HepG2 (cell line): ENCODE measurements at regions of chr9 and their contacts with region 1.

Region 1: DNA sequence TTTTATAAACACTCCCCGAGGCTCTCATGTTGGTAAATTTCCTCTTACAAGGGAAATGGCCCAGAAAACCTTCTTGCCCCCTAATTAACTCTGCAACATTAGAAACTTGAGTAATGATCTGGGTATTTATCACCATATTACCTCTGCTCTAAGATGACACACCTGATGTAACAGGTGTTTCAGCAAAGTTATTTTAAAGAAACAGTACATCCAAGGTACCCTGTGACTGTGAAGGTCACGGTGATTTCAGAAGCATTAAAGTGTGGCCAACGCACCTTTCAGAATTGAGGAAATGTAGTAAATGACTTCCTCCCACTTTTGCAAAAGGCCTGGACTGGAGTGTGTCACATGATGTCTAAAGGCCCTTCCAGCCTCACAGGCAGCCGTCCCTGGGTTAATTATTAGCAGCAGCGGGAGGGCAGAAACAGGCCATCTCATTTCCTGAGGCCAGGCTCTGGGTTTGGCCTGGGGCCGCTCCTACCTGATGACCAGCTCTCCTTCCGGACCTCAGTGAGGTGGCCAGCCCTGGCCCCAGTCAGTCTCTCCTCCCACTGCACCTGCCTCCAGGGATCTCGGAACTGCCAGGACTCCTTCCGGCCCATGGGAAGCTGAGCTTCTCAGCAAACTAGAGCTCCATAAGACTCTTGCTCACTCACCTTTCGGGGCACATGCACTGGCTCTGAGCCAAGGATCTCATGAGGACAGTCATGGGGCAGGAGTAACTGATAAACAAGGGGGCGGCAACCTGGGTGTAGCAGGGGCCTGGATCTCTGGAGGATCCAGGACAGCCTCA is 20.7 kb downstream of the PTPN3 start:
- DNase-seq: peak; percentile 97
- ATAC-seq: peak; percentile 98
- H3K4me3 ChIP-seq: peak overlapping the region; percentile 39 to 63 (median 41)
- H3K27ac ChIP-seq: peak overlapping the region; percentile 84
- H3K4me1 ChIP-seq: peaks cover 58% of the 10 kb centered on the region
- H3K27me3 ChIP-seq: no peaks in the 10 kb centered on the region
- CTCF ChIP-seq: no peak
- EP300 ChIP-seq: peak in 1 of 2 experiments; percentile 70; a peak in 2 of 4 replicates
- POLR2A ChIP-seq: peak; percentile 91 to 93
- RAD21 ChIP-seq: peak; percentile 31

Region 2: DNA sequence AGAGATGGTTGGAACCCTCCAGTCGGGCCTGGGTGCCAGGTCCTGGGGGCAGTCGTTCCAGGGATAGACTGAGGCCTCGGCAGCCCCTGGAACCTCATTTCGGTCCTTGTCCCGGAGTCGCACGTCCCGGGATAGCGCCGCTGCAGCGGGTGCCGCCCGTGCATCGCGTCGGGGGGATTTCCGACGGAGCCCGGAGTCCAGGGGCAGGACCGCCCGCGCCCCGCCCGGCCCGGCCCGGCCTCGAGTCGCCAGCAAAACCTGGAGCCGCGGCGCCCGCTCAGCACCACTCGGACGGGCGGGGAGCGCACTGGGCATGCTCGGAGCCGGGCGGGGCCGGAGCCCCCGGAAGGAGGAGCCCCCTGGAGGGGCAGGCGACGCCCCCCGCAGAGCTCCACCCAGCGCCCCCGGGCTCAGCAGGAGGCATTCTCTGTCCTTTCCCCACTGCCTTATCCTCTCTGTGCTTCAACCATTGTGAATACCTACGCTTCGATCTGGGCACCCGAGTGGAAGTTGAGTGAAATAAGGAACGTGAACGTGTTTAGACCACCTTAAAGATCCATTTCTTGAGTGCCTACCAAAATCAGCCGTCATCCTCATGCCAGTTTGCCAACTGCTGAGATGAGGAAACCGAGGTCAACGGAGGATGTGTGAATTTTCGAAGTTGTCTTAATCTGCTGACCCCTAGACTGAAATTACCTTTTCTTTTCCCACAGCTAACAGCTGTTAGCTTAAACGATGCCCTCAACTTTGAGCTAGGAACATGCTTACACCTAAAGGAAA is 22.4 kb after region 1 on chr9:
- CTCF ChIA-PET with region 1: no interaction called
- POLR2A ChIA-PET with region 1: interaction called, 71 read pairs
- in situ Hi-C with region 1: no loop called
- intact Hi-C with region 1: loop called (anchors 1 kb)
- DNase-seq: peak; percentile 45
- ATAC-seq: peak; percentile 90
- H3K4me3 ChIP-seq: peak overlapping the region; percentile 36 to 74 (median 72)
- H3K27ac ChIP-seq: no peak overlapping the region
- H3K4me1 ChIP-seq: peaks cover 50% of the 10 kb centered on the region
- H3K27me3 ChIP-seq: peaks cover 1 to 7% of the 10 kb centered on the region in 2 experiments; a peak in 4 of 5 replicates
- CTCF ChIP-seq: no peak
- EP300 ChIP-seq: no peak; a peak in 1 of 4 replicates
- POLR2A ChIP-seq: peak in 1 of 2 experiments; percentile 48; a peak in 1 of 4 replicates
- RAD21 ChIP-seq: 0 out of 2 replicates have a peak, but pooled peaks have one; percentile 18

Region 3: GRCh38 chr9:109507421-109507838 is 30.0 kb after region 1 on chr9:
- CTCF ChIA-PET with region 1: no interaction called
- POLR2A ChIA-PET with region 1: interaction called, 20 read pairs
- in situ Hi-C with region 1: no loop called
- intact Hi-C with region 1: loop called (anchors 1 kb)
- DNase-seq: peak; percentile 92
- ATAC-seq: peak; percentile 89
- H3K4me3 ChIP-seq: peak overlapping the region; percentile 29 to 51 (median 32)
- H3K27ac ChIP-seq: no peak overlapping the region
- H3K4me1 ChIP-seq: peaks cover 51% of the 10 kb centered on the region
- H3K27me3 ChIP-seq: no peaks in the 10 kb centered on the region; a peak in 2 of 5 replicates
- CTCF ChIP-seq: peak; percentile 21; the same call in 1 of the 2 replicates
- EP300 ChIP-seq: peak; percentile 70 to 88; a peak in 3 of 4 replicates
- POLR2A ChIP-seq: no peak
- RAD21 ChIP-seq: no peak